ENCODE measurements at regions of chr18 and their contacts with region 1.

Region 1: DNA sequence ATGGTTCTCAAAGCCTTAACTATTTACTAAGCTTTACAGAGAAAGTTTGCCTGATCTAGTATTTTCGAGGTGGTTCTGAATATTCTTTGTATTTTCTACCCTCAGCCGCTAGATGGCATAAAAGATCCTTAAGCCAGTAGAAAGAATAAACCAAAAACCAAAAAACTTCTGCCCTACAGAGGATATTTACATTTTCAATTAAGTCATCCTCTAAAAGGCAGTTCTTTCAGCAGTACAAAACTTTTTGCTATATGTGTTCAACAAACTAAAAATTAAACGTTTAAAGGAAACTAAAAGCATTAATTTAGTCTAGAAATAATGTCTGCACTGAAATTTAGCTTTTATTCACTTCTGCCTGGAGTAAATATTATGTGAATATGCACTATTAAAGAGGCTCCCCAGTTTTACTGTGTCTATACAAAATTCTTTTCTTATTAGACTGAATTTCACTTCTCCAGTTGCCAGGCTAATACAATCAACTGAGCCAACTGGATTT is 297.5 kb downstream of the PIEZO2 start:
- DNase-seq: no peak
- ATAC-seq: no peak
- H3K4me3 Mint-ChIP-seq: no peak overlapping the region
- H3K27ac Mint-ChIP-seq: no peak overlapping the region
- H3K4me1 Mint-ChIP-seq: no peaks in the 10 kb centered on the region
- H3K27me3 Mint-ChIP-seq: peaks cover 11% of the 10 kb centered on the region
- CTCF ChIP-seq: peak; percentile 36

Region 2: GRCh38 chr18:11040823-11041656 is 189.2 kb after region 1 on chr18:
- CTCF ChIA-PET with region 1: interaction called, 5 read pairs
- POLR2A ChIA-PET with region 1: no interaction called
- intact Hi-C with region 1: loop called (anchors 1 kb)
- DNase-seq: no peak
- ATAC-seq: no peak
- H3K4me3 Mint-ChIP-seq: no peak overlapping the region
- H3K27ac Mint-ChIP-seq: no peak overlapping the region
- H3K4me1 Mint-ChIP-seq: no peaks in the 10 kb centered on the region
- H3K27me3 Mint-ChIP-seq: peaks cover 8% of the 10 kb centered on the region
- CTCF ChIP-seq: no peak

Region 3: GRCh38 chr18:11553098-11553940 is 701.4 kb after region 1 on chr18:
- CTCF ChIA-PET with region 1: interaction called, 10 read pairs
- POLR2A ChIA-PET with region 1: no interaction called
- intact Hi-C with region 1: no loop called
- DNase-seq: no peak
- ATAC-seq: peak; percentile 54
- H3K4me3 Mint-ChIP-seq: no peak overlapping the region
- H3K27ac Mint-ChIP-seq: no peak overlapping the region
- H3K4me1 Mint-ChIP-seq: peaks cover 6% of the 10 kb centered on the region
- H3K27me3 Mint-ChIP-seq: peaks cover 4% of the 10 kb centered on the region
- CTCF ChIP-seq: peak; percentile 61